ENCODE measurements at regions of chr15 and their contacts with region 1.

Region 1: GRCh38 chr15:32774022-32774421 is 56.2 kb downstream of the GREM1 start:
- DNase-seq: peak; percentile 81 to 90
- ATAC-seq: peak; percentile 95 to 97
- H3K4me3 ChIP-seq: no peak overlapping the region
- H3K27ac ChIP-seq: peak overlapping the region; percentile 72 to 80
- H3K4me1 ChIP-seq: peaks cover 22% of the 10 kb centered on the region
- CTCF ChIP-seq: no peak
- EP300 ChIP-seq: peak; percentile 81 to 86; a peak in 4 of 5 replicates
- POLR2A ChIP-seq: no peak
- RAD21 ChIP-seq: peak; percentile 26 to 50; a peak in 3 of 5 replicates

Region 2: GRCh38 chr15:32643907-32644445 is 130.0 kb before region 1 on chr15:
- CTCF ChIA-PET with region 1: no interaction called
- POLR2A ChIA-PET with region 1: no interaction called
- DNase-seq: no peak
- ATAC-seq: no peak
- H3K4me3 ChIP-seq: no peak overlapping the region
- H3K27ac ChIP-seq: no peak overlapping the region
- H3K4me1 ChIP-seq: peaks cover 7% of the 10 kb centered on the region; the same call in 1 of the 3 replicates
- CTCF ChIP-seq: no peak
- EP300 ChIP-seq: no peak
- POLR2A ChIP-seq: no peak
- RAD21 ChIP-seq: no peak

Region 3: DNA sequence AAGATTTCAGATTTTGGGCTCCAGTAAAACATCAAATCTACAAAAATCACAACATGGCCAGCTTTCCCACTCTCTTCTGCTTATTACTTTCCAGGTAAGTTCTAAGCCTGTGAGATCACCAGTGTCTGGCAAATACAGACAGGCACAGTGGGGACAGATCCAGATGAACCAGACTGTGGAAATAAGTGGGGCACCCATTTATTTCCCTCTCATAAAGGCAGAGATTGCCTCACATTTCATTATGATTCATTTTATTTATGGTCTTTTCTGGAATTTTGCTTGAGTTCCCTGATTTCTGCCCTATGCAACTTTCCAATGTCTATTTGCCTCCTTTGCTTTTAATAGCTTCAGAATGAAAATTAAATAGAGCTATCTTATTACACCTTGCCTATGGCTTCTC is 10.6 kb after region 1 on chr15:
- CTCF ChIA-PET with region 1: interaction called, 10 read pairs
- POLR2A ChIA-PET with region 1: no interaction called
- DNase-seq: no peak
- ATAC-seq: no peak
- H3K4me3 ChIP-seq: no peak overlapping the region
- H3K27ac ChIP-seq: no peak overlapping the region
- H3K4me1 ChIP-seq: no peaks in the 10 kb centered on the region
- CTCF ChIP-seq: no peak
- EP300 ChIP-seq: no peak
- POLR2A ChIP-seq: no peak
- RAD21 ChIP-seq: no peak